ENCODE measurements at regions of chr1 and their contacts with region 1.

Region 1: GRCh38 chr1:185652348-185652747 is 81.8 kb upstream of the HMCN1 start:
- DNase-seq: no peak
- ATAC-seq: peak; percentile 52
- H3K4me3 Mint-ChIP-seq: no peak overlapping the region
- H3K27ac Mint-ChIP-seq: no peak overlapping the region
- H3K4me1 Mint-ChIP-seq: peaks cover 17% of the 10 kb centered on the region
- H3K27me3 Mint-ChIP-seq: peaks cover 10% of the 10 kb centered on the region
- CTCF ChIP-seq: no peak

Region 2: GRCh38 chr1:185610954-185611353 is 41.4 kb before region 1 on chr1:
- CTCF ChIA-PET with region 1: no interaction called
- POLR2A ChIA-PET with region 1: no interaction called
- DNase-seq: no peak
- ATAC-seq: no peak
- H3K4me3 Mint-ChIP-seq: no peak overlapping the region
- H3K27ac Mint-ChIP-seq: no peak overlapping the region
- H3K4me1 Mint-ChIP-seq: peaks cover 6% of the 10 kb centered on the region
- H3K27me3 Mint-ChIP-seq: no peaks in the 10 kb centered on the region
- CTCF ChIP-seq: no peak

Region 3: DNA sequence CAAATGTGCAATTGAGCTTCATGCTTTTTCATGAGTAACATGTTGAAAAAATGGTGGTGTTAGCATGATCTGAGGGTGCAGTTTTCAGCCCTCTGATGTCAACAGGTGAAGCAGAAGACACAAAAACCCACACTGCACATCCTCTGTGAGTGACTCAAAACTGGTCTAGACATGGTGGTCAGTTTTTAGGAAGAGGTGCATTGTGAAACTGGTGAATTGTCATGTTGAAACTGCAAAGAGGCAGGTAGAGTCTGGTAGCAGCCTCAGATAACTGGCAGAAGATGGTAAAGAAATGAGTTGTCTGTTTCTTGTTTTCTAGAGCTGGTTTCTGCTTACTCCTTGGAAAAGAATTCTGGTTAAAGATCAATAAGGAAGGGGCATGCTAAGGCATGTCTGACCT is 15.5 kb before region 1 on chr1:
- CTCF ChIA-PET with region 1: no interaction called
- POLR2A ChIA-PET with region 1: no interaction called
- DNase-seq: no peak
- ATAC-seq: no peak
- H3K4me3 Mint-ChIP-seq: no peak overlapping the region
- H3K27ac Mint-ChIP-seq: no peak overlapping the region
- H3K4me1 Mint-ChIP-seq: no peaks in the 10 kb centered on the region
- H3K27me3 Mint-ChIP-seq: peaks cover 5% of the 10 kb centered on the region; the same call in 1 of the 2 replicates
- CTCF ChIP-seq: no peak

Region 4: GRCh38 chr1:185670187-185670627 is 17.9 kb after region 1 on chr1:
- CTCF ChIA-PET with region 1: interaction called, 10 read pairs
- POLR2A ChIA-PET with region 1: no interaction called
- DNase-seq: peak; percentile 50
- ATAC-seq: peak; percentile 72
- H3K4me3 Mint-ChIP-seq: no peak overlapping the region
- H3K27ac Mint-ChIP-seq: no peak overlapping the region
- H3K4me1 Mint-ChIP-seq: peaks cover 24% of the 10 kb centered on the region
- H3K27me3 Mint-ChIP-seq: no peaks in the 10 kb centered on the region
- CTCF ChIP-seq: no peak

Region 5: GRCh38 chr1:185834371-185834905 is 182.1 kb after region 1 on chr1:
- CTCF ChIA-PET with region 1: no interaction called
- POLR2A ChIA-PET with region 1: no interaction called
- DNase-seq: no peak
- ATAC-seq: no peak
- H3K4me3 Mint-ChIP-seq: no peak overlapping the region
- H3K27ac Mint-ChIP-seq: no peak overlapping the region
- H3K4me1 Mint-ChIP-seq: peaks cover 23% of the 10 kb centered on the region
- H3K27me3 Mint-ChIP-seq: no peaks in the 10 kb centered on the region
- CTCF ChIP-seq: no peak